ENCODE measurements at regions of chr13 and their contacts with region 1.

Region 1: DNA sequence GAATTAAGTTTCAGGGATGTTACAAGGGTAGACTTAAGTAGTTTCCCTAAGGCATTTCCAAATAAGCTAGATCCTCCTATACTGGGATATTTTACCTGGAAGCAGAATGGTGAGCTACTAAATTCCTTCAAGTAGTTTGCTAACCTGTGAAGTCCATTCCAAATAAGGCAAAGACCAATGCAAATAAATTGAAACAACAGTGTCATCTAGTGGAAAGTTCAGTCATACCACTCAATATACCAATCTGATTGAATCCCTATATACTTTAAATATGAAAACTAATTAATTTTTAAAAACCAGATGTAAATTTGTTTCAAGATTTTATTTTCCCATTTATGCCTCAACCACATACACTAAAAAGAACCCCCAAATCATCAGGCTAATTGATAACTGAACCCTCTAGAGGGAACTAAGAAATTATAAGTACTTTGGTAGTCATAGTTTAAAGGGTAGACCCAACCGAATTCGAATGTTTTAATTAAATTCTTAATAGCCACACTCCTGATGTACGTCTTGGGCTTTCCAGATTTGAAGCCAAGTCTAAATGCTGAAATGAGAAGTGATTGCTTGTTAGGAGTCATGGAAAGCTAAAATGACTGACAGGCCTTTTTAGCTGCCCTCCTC is 223.7 kb downstream of the TBC1D4 start:
- DNase-seq: peak; percentile 36
- H3K4me3 ChIP-seq: no peak overlapping the region
- H3K27ac ChIP-seq: no peak overlapping the region
- H3K4me1 ChIP-seq: no peaks in the 10 kb centered on the region; a peak in 1 of 4 replicates
- H3K27me3 ChIP-seq: peaks cover 5% of the 10 kb centered on the region; the same call in 1 of the 2 replicates
- CTCF ChIP-seq: peak; percentile 86
- EP300 ChIP-seq: no peak
- RAD21 ChIP-seq: peak; percentile 92

Region 2: DNA sequence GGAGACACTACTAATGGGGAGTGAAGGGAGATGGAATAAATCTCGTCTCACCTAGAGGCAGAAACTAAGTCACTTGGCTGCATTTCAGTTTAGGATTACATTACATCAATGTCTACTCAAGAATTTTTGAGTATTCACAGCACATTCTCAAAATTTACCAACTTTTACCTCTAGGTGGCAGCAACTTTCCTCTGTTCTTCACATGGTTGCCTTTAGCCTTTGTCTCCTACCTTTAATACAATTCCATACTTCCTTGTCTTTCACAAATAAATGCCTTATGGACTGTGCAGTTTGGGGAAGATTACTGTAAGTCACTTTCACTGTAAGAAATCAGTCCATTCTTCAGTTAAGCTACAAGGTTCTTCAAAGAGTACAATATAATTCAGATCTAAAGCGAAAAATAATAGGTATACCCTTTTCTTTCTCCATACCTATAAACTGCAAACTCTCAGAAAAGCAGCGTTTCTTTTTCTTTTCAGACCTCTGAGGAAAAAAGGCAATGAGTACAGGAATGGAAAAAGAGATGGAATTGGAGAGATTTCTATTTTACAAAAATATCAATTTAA is 1503.5 kb before region 1 on chr13:
- CTCF ChIA-PET with region 1: interaction called, 12 read pairs
- POLR2A ChIA-PET with region 1: no interaction called
- DNase-seq: peak; percentile 30
- H3K4me3 ChIP-seq: no peak overlapping the region; a peak in 1 of 4 replicates
- H3K27ac ChIP-seq: peak overlapping the region in 1 of 2 experiments; percentile 14; a peak in 1 of 4 replicates
- H3K4me1 ChIP-seq: peaks cover 4 to 20% of the 10 kb centered on the region in 2 experiments; a peak in 3 of 4 replicates
- H3K27me3 ChIP-seq: no peaks in the 10 kb centered on the region
- CTCF ChIP-seq: peak; percentile 75
- EP300 ChIP-seq: no peak
- RAD21 ChIP-seq: peak; percentile 91

Region 3: DNA sequence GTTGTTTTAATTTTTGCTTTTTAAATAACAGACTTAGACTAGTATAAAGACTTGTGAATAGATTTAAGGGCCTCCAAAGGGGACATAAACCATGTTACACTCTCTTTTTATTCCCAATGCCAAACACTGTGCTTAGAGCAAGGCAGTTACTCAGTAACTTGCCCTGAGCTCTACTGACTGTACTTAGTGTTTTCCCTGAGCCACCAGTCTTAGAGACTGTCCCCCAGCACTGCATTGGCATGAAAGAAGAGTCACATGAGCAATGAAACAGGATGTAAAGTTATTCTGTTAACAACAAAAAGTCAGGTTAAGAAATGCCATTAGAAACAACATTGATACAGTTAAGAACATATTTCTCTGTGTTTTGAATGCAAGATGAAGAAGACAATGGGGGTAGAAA is 35.8 kb after region 1 on chr13:
- CTCF ChIA-PET with region 1: interaction called, 10 read pairs
- POLR2A ChIA-PET with region 1: no interaction called
- DNase-seq: no peak
- H3K4me3 ChIP-seq: no peak overlapping the region
- H3K27ac ChIP-seq: no peak overlapping the region
- H3K4me1 ChIP-seq: no peaks in the 10 kb centered on the region; a peak in 1 of 4 replicates
- H3K27me3 ChIP-seq: no peaks in the 10 kb centered on the region
- CTCF ChIP-seq: no peak
- EP300 ChIP-seq: no peak
- RAD21 ChIP-seq: no peak